ENCODE measurements at regions of chr5 and their contacts with region 1.

Region 1: GRCh38 chr5:177599731-177600507 is at the start of gene B4GALT7:
- DNase-seq: peak; percentile 66 to 91
- H3K4me3 ChIP-seq: peak within 1 kb of the TSS; percentile 77
- H3K4me1 ChIP-seq: peaks cover 3% of the 10 kb centered on the region
- H3K27me3 ChIP-seq: no peaks in the 10 kb centered on the region

Region 2: GRCh38 chr5:178069909-178070308 is 470.0 kb after region 1 on chr5:
- in situ Hi-C with region 1: loop called (anchors 10 kb)
- DNase-seq: peak; percentile 20 to 73
- H3K4me3 ChIP-seq: no peak overlapping the region
- H3K4me1 ChIP-seq: no peaks in the 10 kb centered on the region
- H3K27me3 ChIP-seq: no peaks in the 10 kb centered on the region

Region 3: DNA sequence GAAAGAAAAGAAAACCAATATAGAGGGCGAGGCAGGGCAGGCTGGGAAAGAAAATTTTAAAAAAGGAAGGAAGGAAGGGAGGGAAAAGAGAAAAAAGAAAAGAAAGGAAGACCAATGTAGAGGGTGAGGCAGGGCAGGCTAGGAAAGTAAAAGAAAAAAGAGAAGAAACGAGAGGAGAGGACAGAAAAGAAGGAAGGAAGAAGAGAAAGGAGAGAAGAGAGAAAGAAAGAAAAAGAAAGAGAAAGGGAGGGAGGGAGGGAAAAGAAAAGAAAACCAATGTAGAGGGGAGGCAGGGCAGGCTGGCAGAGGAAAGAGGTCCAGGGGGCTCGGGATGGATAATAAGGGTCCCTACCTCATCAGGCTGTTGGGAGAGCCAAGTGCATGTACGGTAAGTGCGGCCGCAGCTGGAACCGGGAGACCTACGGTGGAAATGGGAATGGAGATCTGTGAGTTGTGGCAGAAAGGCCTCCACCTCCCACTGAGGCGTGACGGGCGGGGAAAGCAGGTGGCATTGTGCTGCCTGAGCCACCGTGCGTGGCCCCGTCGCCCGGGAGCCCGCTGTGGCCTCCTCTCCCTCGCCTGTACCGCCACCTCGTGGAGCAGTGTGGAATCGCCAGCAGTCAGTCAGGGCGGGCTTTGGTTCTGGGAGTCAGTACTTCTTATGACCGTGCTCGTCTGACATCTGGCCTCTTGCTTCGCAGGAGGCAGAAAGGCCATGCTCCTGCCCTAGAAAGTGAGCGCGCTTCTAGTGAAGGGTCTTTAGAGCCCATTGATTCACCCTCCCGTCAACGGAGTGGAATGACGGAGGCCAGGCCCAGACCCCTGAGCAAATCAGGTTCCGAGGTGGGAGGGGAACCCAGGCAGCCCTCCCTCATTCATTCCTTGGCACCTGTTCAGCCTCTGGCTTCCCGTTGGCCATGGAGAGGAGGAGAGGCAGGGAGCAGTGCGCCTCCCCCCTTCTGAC is 564.1 kb after region 1 on chr5:
- in situ Hi-C with region 1: loop called (anchors 10 kb)
- DNase-seq: peak; percentile 66 to 93
- H3K4me3 ChIP-seq: no peak overlapping the region
- H3K4me1 ChIP-seq: peaks cover 6% of the 10 kb centered on the region; the same call in 1 of the 2 replicates
- H3K27me3 ChIP-seq: no peaks in the 10 kb centered on the region